PC-9 (cell line): ENCODE measurements at regions of chr1 and their contacts with region 1.

Region 1: GRCh38 chr1:174932587-174932986 is 67.2 kb upstream of the CACYBP start:
- DNase-seq: no peak
- H3K4me3 ChIP-seq: no peak overlapping the region
- H3K27ac ChIP-seq: no peak overlapping the region
- H3K4me1 ChIP-seq: no peaks in the 10 kb centered on the region
- H3K27me3 ChIP-seq: no peaks in the 10 kb centered on the region
- CTCF ChIP-seq: no peak; the same call in 1 of the 2 replicates

Region 2: GRCh38 chr1:173903827-173904531 is 1028.6 kb before region 1 on chr1:
- CTCF ChIA-PET with region 1: interaction called, 21 read pairs
- POLR2A ChIA-PET with region 1: no interaction called
- intact Hi-C with region 1: no loop called
- DNase-seq: no peak
- H3K4me3 ChIP-seq: no peak overlapping the region
- H3K27ac ChIP-seq: no peak overlapping the region
- H3K4me1 ChIP-seq: no peaks in the 10 kb centered on the region
- H3K27me3 ChIP-seq: no peaks in the 10 kb centered on the region
- CTCF ChIP-seq: no peak